ENCODE measurements at regions of chr1 and their contacts with region 1.

Region 1: DNA sequence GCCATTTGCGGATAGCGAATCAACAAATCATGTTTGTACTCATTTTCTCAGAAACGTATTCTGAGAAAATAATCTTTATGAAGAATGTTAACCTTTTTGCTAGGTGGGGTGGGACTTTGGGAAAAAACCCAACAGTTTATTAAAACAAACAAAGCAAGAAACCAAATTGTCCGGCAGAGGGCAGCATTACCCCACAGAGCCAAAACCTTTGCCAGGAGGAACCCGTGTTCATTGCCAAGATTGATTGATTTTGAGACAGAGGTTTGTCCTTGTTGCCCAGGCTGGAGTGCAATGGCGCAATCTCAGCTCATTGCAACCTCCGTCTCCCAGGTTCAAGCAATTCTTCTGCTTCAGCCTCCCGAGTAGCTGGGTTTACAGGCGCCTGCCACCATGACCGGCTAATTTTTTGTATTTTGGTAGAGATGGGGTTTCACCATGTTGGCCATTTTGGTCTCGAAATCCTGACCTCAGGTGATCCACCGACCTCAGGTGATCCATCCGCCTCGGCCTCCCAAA is 70.8 kb upstream of the RHOU start:
- DNase-seq: peak; percentile 19 to 95 (median 84)

Region 2: GRCh38 chr1:228717081-228717480 is 52.6 kb after region 1 on chr1:
- intact Hi-C with region 1: no loop called
- DNase-seq: no peak

Region 3: DNA sequence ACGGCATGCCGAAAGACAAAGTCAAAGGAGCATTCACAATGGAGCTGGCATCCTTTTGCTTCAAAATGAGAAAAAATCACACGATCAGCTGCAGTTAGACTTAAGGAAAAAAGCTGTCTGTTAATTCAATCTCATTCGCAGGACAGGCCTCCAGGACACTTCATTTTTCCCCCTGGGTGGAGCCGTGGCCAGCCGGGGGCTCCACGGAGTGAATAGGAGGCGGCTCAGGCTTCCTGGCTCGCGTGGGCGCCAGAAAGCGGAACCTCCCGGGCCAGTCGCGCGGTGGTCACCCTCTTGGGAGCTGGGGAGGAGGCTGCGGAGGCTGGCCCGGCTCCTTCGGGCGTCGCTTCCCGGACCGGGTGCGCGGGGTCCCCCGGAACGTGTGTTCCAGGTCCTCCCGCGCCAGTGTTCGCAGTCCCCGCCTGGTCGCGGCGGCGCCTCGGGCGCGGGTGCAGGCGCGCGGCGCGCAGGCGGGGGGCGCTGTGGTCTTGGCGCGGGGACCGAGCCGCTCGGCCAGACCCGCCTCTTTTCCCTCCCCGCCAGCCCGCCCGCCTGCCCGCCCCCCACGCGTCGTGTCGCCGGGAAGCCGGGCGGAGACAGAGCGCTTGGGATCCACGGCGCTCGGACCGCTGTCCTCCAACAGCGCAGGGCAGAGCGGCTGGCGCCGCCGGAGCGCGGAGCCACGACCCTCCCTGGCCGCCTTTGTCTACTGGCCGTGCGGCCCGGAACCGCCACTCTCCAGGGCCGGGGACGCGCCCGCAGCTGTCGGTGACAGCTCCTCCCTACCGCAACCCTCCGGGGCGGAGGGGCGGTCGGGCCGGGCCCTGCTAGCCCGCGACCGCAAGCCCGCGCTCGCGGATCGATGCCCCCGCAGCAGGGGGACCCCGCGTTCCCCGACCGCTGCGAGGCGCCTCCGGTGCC is 70.7 kb after region 1 on chr1 and contains the start of gene RHOU:
- intact Hi-C with region 1: loop called (anchors 10 kb)
- DNase-seq: peak; percentile 40 to 93 (median 86)

Region 4: GRCh38 chr1:229227298-229227919 is 563.0 kb after region 1 on chr1:
- intact Hi-C with region 1: loop called (anchors 10 kb)
- DNase-seq: peak; percentile 78 to 97 (median 92)

Region 5: GRCh38 chr1:229258031-229258756 is 593.7 kb after region 1 on chr1:
- intact Hi-C with region 1: loop called (anchors 10 kb)
- DNase-seq: peak; percentile 28 to 93 (median 81)

Region 6: DNA sequence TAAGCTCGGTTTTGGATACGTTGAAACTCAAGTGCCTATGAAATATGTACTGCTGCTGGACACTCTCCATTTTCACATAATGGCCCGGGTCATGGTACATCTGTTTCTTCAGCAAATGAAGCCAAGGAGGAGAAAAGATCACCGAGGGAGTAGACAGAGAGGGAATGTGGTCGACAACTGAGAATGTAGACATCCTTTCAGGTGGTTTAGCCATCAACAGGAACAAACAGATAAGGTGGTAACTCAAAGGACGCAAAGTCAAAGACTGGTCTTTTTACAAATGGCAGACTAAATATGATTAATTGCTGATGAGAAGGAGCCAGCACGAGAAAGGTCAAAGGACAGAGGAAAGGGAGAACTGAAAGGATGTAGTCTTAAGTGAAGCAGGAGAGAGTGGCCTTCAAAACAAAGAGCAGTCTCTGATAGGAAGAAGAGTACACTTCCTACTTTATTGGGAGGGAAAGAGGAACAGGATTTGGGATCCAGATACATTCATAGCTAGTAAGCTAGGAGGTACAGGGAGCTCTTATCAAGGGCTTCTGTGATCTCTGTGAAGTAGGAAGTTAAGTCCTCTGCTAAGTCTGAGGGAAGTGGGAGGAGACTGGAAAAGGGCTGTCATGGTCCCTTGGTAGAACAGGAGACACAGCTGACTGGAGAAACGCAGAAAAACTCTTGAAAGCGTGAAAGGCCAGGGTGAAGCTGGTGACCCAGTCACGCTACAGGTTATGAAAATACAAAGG is 815.4 kb after region 1 on chr1:
- intact Hi-C with region 1: loop called (anchors 10 kb)
- DNase-seq: no peak